AG04450 (cell line): ENCODE measurements at regions of chr7 and their contacts with region 1.

Region 1: DNA sequence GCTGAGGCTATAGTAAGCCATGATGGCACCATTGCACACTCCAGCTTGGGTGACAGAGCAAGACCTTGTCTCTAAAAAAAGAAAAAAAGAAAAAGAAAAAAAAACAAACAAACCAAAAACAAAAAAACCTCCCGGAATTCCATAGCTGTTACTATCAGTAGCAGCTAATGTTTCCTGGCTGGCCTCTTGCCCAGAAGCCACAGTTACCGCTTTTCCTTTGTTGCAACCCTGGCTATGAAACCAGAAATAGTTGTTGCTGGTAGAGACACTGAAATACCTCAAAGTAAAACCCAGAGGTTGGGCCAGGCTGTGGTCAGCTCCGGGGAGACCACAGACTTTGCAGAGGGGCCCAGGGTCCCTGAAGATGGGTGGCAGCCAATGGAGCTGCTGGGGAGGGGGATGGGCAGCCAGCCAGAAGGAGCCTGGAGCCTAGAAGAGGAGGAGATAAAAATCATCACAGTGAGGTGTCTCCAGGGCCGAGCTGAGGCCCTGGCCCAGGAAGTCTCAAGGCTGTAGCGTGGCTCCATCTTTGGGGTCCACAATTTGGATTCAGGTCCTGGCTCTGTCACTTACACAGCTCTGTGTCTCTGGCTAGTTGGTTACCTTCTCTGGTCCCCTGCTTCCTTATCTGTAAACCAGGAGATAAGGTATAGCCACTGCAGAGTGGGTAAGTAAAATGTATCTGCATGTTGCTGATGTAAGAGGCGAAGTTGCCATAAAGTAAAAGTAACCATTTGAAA is 3.4 kb upstream of the CHST12 start:
- DNase-seq: peak; percentile 87
- H3K4me3 ChIP-seq: peak overlapping the region; percentile 18; the same call in 1 of the 2 replicates
- H3K27ac ChIP-seq: peak overlapping the region; percentile 96
- H3K27me3 ChIP-seq: no peaks in the 10 kb centered on the region
- CTCF ChIP-seq: no peak

Region 2: DNA sequence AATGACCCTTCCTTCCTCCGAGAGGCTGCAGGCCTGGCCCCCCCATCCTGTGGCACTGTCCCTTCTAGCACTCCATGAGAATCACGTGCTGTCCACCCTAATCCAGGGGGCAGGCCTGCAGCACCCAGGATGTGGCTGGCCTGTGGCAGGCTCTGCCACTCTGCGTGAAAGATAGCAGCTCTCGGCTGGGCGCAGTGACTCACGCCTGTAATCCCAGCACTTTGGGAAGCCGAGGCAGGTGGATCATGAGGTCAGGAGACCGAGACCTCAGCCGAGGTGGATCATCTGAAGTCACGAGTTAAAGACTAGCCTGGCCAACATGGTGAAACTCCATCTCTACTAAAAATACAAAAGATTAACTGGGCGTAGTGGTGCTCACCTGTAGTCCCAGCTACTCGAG is 100.7 kb after region 1 on chr7:
- CTCF ChIA-PET with region 1: no interaction called
- POLR2A ChIA-PET with region 1: interaction called, 12 read pairs
- DNase-seq: no peak
- H3K4me3 ChIP-seq: no peak overlapping the region
- H3K27ac ChIP-seq: no peak overlapping the region
- H3K27me3 ChIP-seq: peaks cover 13% of the 10 kb centered on the region
- CTCF ChIP-seq: no peak